Heart left ventricle (tissue), 16 donors: ENCODE measurements at regions of chr3 and their contacts with region 1.

Region 1: DNA sequence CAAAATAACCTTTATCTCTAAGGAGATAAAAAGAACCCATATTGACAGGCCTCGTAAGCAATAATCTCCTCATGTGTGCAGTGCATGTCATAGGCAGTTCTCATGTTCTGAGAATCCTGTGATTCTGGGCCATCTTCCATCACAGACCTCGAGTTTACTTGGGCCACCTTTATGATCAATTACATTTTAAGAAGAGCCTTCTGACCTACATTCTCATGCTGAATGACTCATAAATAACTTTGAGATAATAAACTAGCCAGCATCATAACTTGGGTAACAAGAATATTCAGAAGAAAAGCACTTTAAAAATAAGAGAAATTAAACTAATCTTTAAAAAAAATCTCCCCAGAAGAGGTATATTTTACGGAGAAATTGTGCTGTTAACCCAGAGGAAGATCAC is 310.7 kb upstream of the ZNF717 start:
- DNase-seq: no peak
- ATAC-seq: no peak
- H3K4me3 ChIP-seq: no peak overlapping the region
- H3K27ac ChIP-seq: no peak overlapping the region
- H3K4me1 ChIP-seq: no peaks in the 10 kb centered on the region
- H3K27me3 ChIP-seq: peaks cover 0 to 3% (median 0%) of the 10 kb centered on the region in 9 donors
- CTCF ChIP-seq: no peak
- POLR2A ChIP-seq: no peak

Region 2: GRCh38 chr3:76051145-76051544 is 44.9 kb before region 1 on chr3:
- intact Hi-C with region 1: loop called in 1 of 10 experiments (anchors 2 kb)
- DNase-seq: no peak
- ATAC-seq: no peak
- H3K4me3 ChIP-seq: no peak overlapping the region
- H3K27ac ChIP-seq: no peak overlapping the region
- H3K4me1 ChIP-seq: no peaks in the 10 kb centered on the region
- H3K27me3 ChIP-seq: no peaks in the 10 kb centered on the region
- CTCF ChIP-seq: no peak
- POLR2A ChIP-seq: no peak